ENCODE measurements at regions of chr17 and their contacts with region 1.

Region 1: GRCh38 chr17:66373944-66374817 is 71.8 kb downstream of the PRKCA start:
- DNase-seq: peak; percentile 58
- H3K4me3 Mint-ChIP-seq: peak overlapping the region; percentile 73
- H3K27ac Mint-ChIP-seq: peak overlapping the region; percentile 81
- H3K4me1 Mint-ChIP-seq: peaks cover 54% of the 10 kb centered on the region
- H3K27me3 Mint-ChIP-seq: no peaks in the 10 kb centered on the region
- CTCF ChIP-seq: no peak

Region 2: GRCh38 chr17:66351053-66351452 is 23.1 kb before region 1 on chr17:
- CTCF ChIA-PET with region 1: interaction called, 4 read pairs
- intact Hi-C with region 1: loop called (anchors 2 kb)
- DNase-seq: peak; percentile 80
- H3K4me3 Mint-ChIP-seq: peak overlapping the region; percentile 49
- H3K27ac Mint-ChIP-seq: peak overlapping the region; percentile 87
- H3K4me1 Mint-ChIP-seq: peaks cover 81% of the 10 kb centered on the region
- H3K27me3 Mint-ChIP-seq: no peaks in the 10 kb centered on the region
- CTCF ChIP-seq: no peak

Region 3: DNA sequence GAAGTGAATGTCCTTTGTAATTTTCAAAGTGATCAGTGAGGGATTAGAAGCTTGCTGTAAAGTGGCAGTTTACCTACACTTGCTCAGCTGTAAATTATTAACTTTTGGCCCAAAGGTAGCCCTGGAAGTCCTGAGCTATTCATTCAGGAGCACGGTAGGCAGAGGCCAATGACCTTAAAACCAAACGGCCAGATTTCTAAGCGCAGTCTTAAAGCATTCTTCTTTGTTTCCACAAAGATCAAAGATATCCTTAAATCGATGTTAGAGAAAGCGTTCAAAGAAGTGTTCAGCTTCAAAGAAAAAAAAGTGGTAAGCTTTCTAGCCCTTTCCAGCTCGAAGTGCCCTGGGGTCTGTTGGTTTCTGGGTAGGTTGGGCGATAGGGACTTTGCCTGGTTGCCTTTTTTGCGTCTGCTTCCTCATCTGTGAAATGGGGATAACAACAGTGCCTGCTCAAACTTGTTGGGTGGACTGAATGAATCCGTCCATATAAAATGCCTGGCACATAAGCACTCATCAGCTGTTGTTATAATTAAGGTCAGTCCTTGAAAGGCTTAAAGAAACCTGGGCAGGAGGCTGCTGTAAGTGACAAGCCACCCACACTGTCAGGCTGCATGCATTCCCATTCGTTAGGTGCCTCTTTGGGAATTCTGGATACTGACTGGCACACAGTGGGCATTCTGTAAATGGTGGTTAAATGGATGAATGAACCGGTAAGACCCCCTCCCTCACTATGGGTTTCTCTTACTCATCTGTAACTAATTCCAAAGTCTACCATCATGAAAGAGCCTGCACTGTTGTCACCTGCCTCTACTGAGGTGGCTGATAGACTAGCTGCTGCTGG is 41.4 kb after region 1 on chr17:
- CTCF ChIA-PET with region 1: interaction called, 11 read pairs
- intact Hi-C with region 1: loop called (anchors 1 kb)
- DNase-seq: peak; percentile 51
- H3K4me3 Mint-ChIP-seq: peak overlapping the region; percentile 36
- H3K27ac Mint-ChIP-seq: peak overlapping the region; percentile 65
- H3K4me1 Mint-ChIP-seq: peaks cover 63% of the 10 kb centered on the region
- H3K27me3 Mint-ChIP-seq: no peaks in the 10 kb centered on the region
- CTCF ChIP-seq: no peak

Region 4: DNA sequence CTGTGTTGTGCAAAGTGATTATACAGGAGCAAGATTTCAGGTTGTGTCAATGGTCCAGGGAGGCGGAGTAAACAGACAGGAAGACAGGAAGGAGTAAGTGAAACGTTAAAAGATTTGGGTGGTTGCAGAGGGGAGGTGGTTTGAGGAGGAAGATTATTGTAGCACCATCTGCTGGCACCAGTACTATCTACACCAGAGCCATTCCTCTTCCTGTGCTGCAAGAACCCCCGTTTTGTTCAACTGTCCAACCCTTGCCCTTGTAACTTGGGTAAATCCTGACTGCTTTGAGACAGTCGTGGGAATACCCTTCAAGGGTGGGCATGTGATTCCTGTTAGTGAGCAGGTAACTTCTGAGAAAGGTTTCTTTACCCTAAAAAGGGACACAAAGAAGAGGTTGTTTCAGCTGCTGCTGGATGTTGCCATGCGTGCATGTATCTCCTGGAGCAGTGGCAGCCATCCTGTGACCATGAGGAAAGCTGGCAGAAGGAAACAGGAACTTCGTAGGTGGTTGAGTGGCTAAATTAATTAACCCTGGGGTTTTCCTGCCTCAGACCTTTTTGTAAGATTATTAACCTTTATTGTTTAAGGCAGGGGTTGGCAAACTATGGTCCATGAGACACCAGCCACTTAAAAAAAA is 52.3 kb after region 1 on chr17:
- CTCF ChIA-PET with region 1: no interaction called
- intact Hi-C with region 1: no loop called
- DNase-seq: peak; percentile 21
- H3K4me3 Mint-ChIP-seq: no peak overlapping the region
- H3K27ac Mint-ChIP-seq: peak overlapping the region; percentile 6
- H3K4me1 Mint-ChIP-seq: peaks cover 57% of the 10 kb centered on the region
- H3K27me3 Mint-ChIP-seq: no peaks in the 10 kb centered on the region
- CTCF ChIP-seq: no peak